ENCODE measurements at regions of chr17 and their contacts with region 1.

Region 1: DNA sequence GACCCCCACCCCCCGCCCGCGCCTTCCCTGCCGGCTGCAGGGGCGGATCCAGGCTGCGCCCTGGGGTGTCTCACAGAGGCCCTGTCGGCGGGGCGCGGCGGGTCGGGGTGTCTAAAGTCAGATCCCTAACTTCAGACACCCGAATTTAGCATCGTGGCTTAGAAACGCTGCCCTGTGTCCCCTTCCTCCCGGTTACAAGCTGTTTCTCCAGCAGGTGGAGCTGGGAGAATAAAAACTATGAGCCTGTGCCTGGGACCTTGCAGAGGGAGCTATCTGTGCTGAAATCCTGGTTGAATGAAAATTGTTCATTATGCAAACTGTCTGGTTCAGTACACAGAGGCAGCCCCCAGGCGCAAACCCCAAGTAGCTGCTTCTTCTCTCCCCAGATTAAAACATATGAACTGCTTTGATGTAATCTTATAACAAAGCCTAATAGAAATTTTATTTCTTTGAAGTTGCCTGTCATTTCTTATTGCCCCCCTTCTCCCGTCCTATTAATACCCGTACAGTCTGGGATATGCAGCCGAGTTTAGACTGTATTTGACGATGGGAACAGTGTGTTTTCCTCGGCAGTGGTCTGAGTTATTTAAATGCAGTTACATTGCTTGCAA is 79.0 kb downstream of the RPA1 start:
- ATAC-seq: peak; percentile 79 to 90 (median 87)
- H3K4me3 ChIP-seq: peak overlapping the region; percentile 17 to 23 (median 19)
- H3K27ac ChIP-seq: peak overlapping the region in 1 of 2 donors; percentile 28
- H3K4me1 ChIP-seq: peaks cover 36 to 57% of the 10 kb centered on the region in 2 donors

Region 2: DNA sequence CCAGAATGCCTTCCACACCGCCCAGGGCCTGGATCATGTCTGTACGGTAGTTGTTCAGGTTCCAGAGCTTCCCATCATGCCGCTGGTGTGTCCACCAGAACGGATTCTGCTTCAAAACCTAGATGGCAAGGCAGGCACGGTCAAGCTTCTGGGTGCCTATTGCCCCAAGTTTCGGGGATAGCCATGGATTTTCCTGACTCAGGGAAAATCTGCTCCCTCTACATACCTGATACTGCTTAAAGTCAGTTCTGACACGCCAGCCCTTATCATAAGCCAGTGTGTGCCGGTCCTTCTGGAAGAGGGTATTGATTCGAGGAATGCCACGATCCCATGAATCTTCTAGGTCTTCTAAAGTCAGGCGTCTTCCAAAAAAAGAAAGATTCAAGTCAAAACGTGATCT is 247.8 kb before region 1 on chr17:
- in situ Hi-C with region 1: no loop called
- ATAC-seq: no peak
- H3K4me3 ChIP-seq: no peak overlapping the region
- H3K27ac ChIP-seq: no peak overlapping the region
- H3K4me1 ChIP-seq: no peaks in the 10 kb centered on the region

Region 3: GRCh38 chr17:2029911-2030778 is 121.3 kb after region 1 on chr17 and contains the start of gene DPH1:
- in situ Hi-C with region 1: loop called (anchors 5 to 25 kb)
- ATAC-seq: peak; percentile 77 to 87 (median 86)
- H3K4me3 ChIP-seq: peak within 1 kb of the TSS; percentile 81 to 99 (median 87)
- H3K27ac ChIP-seq: peak within 1 kb of the TSS; percentile 71 to 74
- H3K4me1 ChIP-seq: peaks cover 16 to 24% of the 10 kb centered on the region in 2 donors
- total RNA-seq, gene DPH1: 15.3 to 113 (median 29.0) TPM

Region 4: DNA sequence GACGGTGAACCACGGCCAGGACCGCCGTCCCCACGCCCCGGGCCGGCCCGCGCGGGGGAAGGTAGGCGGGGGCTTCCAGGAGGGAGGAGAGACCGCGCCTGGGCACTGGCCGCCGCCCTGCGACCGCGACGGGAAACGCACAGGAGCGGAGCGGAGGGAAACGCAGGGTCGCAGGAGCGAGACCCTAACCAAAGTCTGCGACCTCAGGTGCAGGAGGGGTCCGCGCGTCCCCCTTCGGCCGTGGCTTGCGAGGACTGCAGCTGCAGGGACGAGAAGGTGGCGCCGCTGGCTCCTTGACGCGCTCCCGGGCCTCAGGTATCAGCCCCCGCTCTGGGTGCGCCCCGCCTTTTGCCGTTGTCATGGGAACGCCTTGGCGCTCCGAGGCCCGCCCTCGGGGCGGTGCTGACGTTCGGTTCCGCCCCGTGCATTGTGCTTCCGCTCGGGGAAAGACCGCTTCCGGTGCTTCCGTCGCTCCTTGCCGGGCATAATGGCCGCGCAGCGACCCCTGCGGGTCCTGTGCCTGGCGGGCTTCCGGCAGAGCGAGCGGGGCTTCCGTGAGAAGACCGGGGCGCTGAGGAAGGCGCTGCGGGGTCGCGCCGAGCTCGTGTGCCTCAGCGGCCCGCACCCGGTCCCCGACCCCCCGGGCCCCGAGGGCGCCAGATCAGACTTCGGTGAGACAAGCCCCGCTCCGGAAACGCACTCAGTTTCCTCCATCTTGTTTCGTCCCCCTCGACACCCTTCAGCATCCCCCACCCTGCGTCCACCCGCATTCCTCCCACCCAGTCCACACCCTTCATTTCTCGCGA is 133.0 kb after region 1 on chr17 and contains the start of gene OVCA2:
- in situ Hi-C with region 1: loop called in 3 of 9 experiments (anchors 10 to 25 kb)
- ATAC-seq: peak; percentile 80 to 91 (median 87)
- H3K4me3 ChIP-seq: peak within 1 kb of the TSS; percentile 59 to 80 (median 74)
- H3K27ac ChIP-seq: peak within 1 kb of the TSS; percentile 91 to 94
- H3K4me1 ChIP-seq: peaks cover 11 to 23% of the 10 kb centered on the region in 2 donors
- total RNA-seq, gene OVCA2: 10.1 to 28.5 (median 20.2) TPM

Region 5: GRCh38 chr17:2282297-2282873 is 373.6 kb after region 1 on chr17:
- in situ Hi-C with region 1: loop called in 1 of 9 experiments (anchors 25 kb)
- ATAC-seq: peak; percentile 50 to 97 (median 78)
- H3K4me3 ChIP-seq: no peak overlapping the region
- H3K27ac ChIP-seq: no peak overlapping the region
- H3K4me1 ChIP-seq: no peaks in the 10 kb centered on the region

Measured in motor neuron (in vitro differentiated cells).